Endothelial cell of umbilical vein (primary cell): ENCODE measurements at regions of chr12 and their contacts with region 1.

Region 1: GRCh38 chr12:76226397-76226796 is 121.8 kb downstream of the BBS10 start:
- DNase-seq: peak; percentile 90
- H3K4me3 ChIP-seq: no peak overlapping the region
- H3K27ac ChIP-seq: peak overlapping the region; percentile 80
- H3K4me1 ChIP-seq: peaks cover 30% of the 10 kb centered on the region
- H3K27me3 ChIP-seq: no peaks in the 10 kb centered on the region
- CTCF ChIP-seq: no peak
- POLR2A ChIP-seq: peak; percentile 39

Region 2: DNA sequence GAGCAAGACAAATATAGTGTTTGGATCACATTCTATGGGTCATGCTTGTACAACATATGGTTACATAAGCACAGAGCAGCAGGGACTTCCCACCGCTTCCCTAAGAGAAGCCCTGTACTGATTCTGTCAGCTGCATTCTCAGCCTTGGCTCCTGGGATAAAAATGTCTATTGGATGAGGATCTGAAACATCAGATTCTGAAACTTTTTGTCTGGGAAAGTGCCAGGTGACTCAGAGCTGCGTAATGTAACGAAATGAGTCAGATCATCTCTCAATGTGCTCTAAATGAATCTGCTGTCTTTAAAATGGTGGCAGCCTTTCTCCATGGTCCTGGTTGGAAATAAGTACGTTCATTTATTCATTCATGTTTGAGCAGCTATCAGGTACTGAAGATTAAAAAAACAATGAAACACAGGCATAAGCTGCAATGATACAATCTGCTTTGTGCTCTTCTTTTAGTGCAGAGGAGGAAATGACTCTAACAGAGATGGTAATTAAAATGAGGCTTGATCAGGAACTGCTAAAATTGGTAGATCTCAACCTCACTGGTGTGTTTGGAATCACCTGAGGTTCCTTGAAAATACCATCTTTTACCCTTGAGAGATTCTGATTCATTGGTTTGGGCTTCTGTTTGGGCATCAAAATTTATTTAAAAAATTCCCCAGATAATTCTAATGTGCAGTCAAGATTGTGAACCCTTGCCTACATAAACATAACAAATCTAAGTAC is 42.8 kb before region 1 on chr12:
- CTCF ChIA-PET with region 1: no interaction called
- POLR2A ChIA-PET with region 1: no interaction called
- dilution Hi-C with region 1: no loop called
- intact Hi-C with region 1: loop called (anchors 2 kb)
- DNase-seq: peak; percentile 98
- H3K4me3 ChIP-seq: no peak overlapping the region
- H3K27ac ChIP-seq: peak overlapping the region; percentile 70
- H3K4me1 ChIP-seq: peaks cover 12% of the 10 kb centered on the region
- H3K27me3 ChIP-seq: no peaks in the 10 kb centered on the region
- CTCF ChIP-seq: no peak
- POLR2A ChIP-seq: no peak

Region 3: GRCh38 chr12:76236611-76237010 is 10.2 kb after region 1 on chr12:
- CTCF ChIA-PET with region 1: interaction called, 8 read pairs
- POLR2A ChIA-PET with region 1: no interaction called
- dilution Hi-C with region 1: no loop called
- intact Hi-C with region 1: loop called (anchors 1 kb)
- DNase-seq: peak; percentile 82
- H3K4me3 ChIP-seq: no peak overlapping the region
- H3K27ac ChIP-seq: peak overlapping the region; percentile 72
- H3K4me1 ChIP-seq: peaks cover 17% of the 10 kb centered on the region
- H3K27me3 ChIP-seq: no peaks in the 10 kb centered on the region
- CTCF ChIP-seq: no peak
- POLR2A ChIP-seq: peak; percentile 55

Region 4: GRCh38 chr12:76329163-76329562 is 102.8 kb after region 1 on chr12:
- CTCF ChIA-PET with region 1: no interaction called
- POLR2A ChIA-PET with region 1: no interaction called
- dilution Hi-C with region 1: no loop called
- intact Hi-C with region 1: loop called (anchors 5 kb)
- DNase-seq: peak; percentile 73
- H3K4me3 ChIP-seq: no peak overlapping the region
- H3K27ac ChIP-seq: peak overlapping the region; percentile 50
- H3K4me1 ChIP-seq: peaks cover 14% of the 10 kb centered on the region
- H3K27me3 ChIP-seq: no peaks in the 10 kb centered on the region
- CTCF ChIP-seq: no peak
- POLR2A ChIP-seq: no peak